ENCODE measurements at regions of chr3 and their contacts with region 1.

Region 1: DNA sequence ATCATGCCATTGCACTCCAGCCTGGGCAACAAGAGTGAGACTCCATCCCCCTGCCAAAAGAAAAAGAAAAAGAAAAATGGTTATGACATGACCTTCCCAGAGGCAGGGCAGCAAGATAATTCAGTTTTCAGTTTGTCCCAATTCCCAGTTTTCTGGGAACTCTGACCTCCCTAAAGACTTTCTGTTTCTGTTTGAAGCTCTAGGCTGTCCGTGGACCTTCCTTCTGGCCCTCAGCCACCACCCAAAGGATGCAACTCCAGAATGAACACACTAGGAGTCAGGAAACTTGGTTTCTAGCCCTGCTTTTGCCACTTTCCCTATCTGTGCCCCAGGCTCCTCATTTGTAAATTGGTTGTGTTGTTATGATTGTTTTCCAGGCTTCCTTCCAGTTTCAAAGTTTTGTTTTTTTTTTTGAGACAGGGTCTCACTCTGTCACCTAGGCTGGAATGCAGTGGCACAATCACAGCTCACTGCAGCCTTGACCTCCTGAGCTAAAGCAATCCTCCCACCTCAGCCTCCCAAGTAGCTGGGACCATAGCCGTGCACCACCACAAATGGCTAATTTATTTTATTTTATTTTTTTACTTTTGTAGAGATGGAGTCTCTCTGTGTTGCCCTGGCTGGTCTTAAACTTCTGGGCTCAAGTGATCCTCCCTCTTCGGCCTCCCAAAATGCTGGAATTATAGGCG is 68.6 kb downstream of the CDC25A start:
- DNase-seq: no peak
- H3K4me3 Mint-ChIP-seq: no peak overlapping the region
- H3K27ac Mint-ChIP-seq: no peak overlapping the region
- H3K4me1 Mint-ChIP-seq: no peaks in the 10 kb centered on the region
- H3K27me3 Mint-ChIP-seq: no peaks in the 10 kb centered on the region
- CTCF ChIP-seq: no peak

Region 2: GRCh38 chr3:47661121-47661752 is 458.4 kb before region 1 on chr3:
- CTCF ChIA-PET with region 1: interaction called, 12 read pairs
- intact Hi-C with region 1: no loop called
- DNase-seq: peak; percentile 4
- H3K4me3 Mint-ChIP-seq: no peak overlapping the region
- H3K27ac Mint-ChIP-seq: no peak overlapping the region
- H3K4me1 Mint-ChIP-seq: no peaks in the 10 kb centered on the region
- H3K27me3 Mint-ChIP-seq: no peaks in the 10 kb centered on the region
- CTCF ChIP-seq: no peak

Region 3: DNA sequence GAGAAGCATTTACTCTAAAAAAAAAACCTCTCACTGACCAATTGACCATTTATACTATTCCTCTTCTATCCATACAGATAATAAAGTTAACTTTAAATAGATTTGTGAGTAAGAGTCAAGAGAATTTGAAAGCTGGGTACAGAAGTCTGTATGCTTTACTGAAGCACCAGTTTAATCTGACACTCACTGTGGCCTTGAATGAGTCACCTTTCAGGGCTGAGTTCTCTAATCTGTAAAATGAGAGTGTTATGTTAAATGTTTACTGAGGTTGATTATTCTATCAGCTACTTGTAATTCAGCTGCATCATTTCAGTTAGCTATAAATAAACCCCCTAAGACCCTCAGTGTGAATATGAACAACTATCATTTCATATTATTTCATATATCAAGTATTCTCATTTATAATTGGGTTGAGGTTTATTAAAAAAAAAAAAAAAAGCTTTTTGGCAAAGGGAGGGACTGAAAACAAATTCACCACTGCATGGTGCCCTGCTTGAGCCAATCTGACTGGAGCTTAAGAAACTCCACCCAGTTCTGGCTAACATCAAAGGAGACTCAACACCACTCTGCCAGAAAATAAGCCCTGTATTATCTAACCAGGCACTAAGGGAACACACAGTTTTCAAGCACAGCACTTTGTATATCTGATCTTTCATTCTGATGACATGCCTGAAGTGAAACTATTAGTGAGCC is 106.2 kb before region 1 on chr3:
- CTCF ChIA-PET with region 1: no interaction called
- intact Hi-C with region 1: no loop called
- DNase-seq: peak; percentile 24
- H3K4me3 Mint-ChIP-seq: no peak overlapping the region
- H3K27ac Mint-ChIP-seq: no peak overlapping the region
- H3K4me1 Mint-ChIP-seq: peaks cover 51% of the 10 kb centered on the region
- H3K27me3 Mint-ChIP-seq: no peaks in the 10 kb centered on the region
- CTCF ChIP-seq: no peak

Region 4: DNA sequence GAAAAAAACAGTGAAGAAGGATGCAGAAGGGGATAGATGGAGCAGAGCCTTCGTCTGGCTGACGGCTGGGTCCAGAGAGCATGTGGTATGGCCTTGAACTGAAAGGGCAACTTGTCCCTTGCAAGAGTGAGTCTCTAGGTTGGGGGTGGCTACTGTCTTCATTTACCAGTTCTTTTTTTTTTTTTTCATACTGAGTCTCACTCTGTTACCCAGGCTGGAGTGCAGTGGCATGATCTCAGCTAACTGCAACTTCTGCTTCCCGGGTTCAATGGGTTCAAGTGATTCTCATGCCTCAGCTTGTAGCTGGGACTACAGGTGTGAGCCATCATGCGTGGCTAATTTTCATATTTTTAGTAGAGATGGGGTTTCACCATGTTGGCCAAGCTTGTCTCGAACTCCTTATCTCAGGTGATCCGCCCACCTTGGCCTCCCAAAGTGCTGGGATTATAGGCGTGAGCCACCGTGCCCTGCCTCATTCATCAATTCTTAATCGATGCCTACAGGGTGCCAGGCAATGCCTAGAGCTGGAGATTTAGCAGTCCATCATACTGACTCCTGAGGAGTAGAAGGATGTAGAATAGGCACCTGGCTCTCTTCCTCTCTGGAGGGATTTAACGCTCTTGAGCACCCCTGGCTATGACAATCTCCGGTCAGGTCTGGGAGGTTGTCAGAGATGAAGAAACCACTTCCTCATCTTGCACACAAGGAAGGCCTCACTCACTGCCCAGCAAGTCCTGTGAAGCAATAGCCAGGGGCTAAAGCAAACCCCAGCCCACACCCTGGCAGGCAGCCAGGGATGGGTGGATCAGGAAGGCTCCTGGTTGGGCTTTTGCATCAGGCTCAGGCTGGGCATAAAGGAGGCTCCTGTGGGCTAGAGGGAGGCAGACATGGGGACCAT is 103.2 kb after region 1 on chr3 and contains the start of gene CAMP:
- CTCF ChIA-PET with region 1: no interaction called
- intact Hi-C with region 1: no loop called
- DNase-seq: peak; percentile 92
- H3K4me3 Mint-ChIP-seq: no peak within 1 kb of the TSS
- H3K27ac Mint-ChIP-seq: no peak within 1 kb of the TSS
- H3K4me1 Mint-ChIP-seq: peaks cover 16% of the 10 kb centered on the region
- H3K27me3 Mint-ChIP-seq: no peaks in the 10 kb centered on the region
- CTCF ChIP-seq: no peak
- total RNA-seq, gene CAMP: not detected in 2 replicates

Measured in Calu3 (cell line).